Activated CD4-positive, alpha-beta memory T cell treated with anti-CD3 and anti-CD28 coated beads for 36 hours (primary cell): ENCODE measurements at regions of chr5 and their contacts with region 1.

Region 1: DNA sequence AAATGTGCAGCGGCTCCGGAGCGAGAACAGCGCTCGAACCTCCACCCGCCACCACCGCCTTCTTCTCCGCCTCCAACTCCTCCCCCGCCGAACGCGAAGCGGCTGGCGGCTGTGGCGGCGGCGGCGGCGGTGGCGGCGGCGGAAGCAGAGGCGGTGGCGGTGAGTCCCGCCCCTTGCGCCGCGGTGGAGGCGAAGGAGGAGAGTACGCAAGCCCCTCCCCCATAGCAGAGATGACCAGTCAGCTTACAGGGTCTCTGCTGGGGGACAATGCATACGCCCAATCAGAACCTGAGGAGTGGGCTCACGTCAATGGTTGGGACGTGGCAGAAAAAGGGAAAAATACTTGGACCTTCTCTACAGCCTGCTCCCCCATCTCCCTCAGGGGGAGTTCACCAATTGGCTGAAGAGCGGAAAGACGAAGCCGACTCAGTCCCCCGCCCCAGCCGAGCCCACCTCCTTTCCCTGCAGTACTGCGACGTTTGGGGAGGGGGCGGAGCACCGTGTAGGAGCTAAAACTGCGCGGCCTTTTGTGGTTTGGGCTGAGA is at the start of gene PJA2:
- DNase-seq: peak; percentile 98
- H3K4me3 Mint-ChIP-seq: peak within 1 kb of the TSS; percentile 89
- H3K27ac Mint-ChIP-seq: peak within 1 kb of the TSS; percentile 97
- H3K4me1 Mint-ChIP-seq: peaks cover 37% of the 10 kb centered on the region
- H3K27me3 Mint-ChIP-seq: no peaks in the 10 kb centered on the region
- total RNA-seq, gene PJA2: 57.3 to 58.5 TPM

Region 2: DNA sequence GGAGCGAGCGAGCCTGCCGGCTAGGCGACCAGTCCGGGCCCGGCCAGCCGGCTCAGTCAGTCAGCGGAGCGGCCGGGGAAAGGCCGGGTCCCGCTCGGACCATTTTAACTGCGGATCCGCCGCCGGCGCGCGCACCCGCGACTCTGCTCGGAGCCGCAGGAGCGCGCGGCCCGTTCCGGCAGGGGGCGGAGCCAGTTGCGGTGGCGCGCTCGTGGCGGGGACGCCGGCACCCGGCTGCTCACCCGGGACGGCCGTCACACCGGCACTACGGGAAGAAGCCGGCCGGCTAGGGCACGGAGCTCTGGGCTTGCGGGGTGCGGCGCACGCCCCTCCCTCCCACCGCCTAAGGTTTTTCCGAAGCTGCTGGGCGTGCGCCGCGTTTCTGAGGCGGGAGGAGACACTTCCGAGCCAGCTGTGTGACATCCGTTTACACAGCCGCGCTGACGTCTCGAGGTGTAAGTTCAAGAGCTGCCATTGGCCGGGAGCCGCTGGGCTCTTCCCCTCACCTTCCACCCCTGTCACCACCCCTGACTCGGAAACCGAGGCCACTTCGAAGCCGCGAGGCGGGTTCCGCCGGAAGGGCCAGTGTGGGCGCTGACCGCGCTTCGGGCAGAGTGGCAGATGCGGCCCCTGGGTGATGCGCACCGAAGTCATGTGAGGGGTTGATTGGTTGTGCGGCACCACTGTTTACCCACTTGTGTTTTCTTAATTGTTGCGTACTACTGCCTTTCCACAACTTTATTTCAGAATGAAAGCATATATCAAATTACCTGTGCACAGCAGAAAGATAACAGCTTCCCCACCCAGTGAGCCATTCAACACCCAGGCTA is 1027.7 kb before region 1 on chr5 and contains the start of gene FBXL17:
- CTCF ChIA-PET with region 1: no interaction called
- POLR2A ChIA-PET with region 1: no interaction called
- intact Hi-C with region 1: loop called (anchors 1 kb)
- DNase-seq: peak; percentile 96
- H3K4me3 Mint-ChIP-seq: peak within 1 kb of the TSS; percentile 79
- H3K27ac Mint-ChIP-seq: peak within 1 kb of the TSS; percentile 92
- H3K4me1 Mint-ChIP-seq: peaks cover 34% of the 10 kb centered on the region
- H3K27me3 Mint-ChIP-seq: peaks cover 1% of the 10 kb centered on the region
- total RNA-seq, gene FBXL17: 5.5 to 6.7 TPM

Region 3: GRCh38 chr5:108818613-108819272 is 591.2 kb before region 1 on chr5:
- CTCF ChIA-PET with region 1: no interaction called
- POLR2A ChIA-PET with region 1: no interaction called
- intact Hi-C with region 1: no loop called
- DNase-seq: no peak
- H3K4me3 Mint-ChIP-seq: no peak overlapping the region
- H3K27ac Mint-ChIP-seq: no peak overlapping the region
- H3K4me1 Mint-ChIP-seq: peaks cover 3% of the 10 kb centered on the region
- H3K27me3 Mint-ChIP-seq: no peaks in the 10 kb centered on the region

Region 4: DNA sequence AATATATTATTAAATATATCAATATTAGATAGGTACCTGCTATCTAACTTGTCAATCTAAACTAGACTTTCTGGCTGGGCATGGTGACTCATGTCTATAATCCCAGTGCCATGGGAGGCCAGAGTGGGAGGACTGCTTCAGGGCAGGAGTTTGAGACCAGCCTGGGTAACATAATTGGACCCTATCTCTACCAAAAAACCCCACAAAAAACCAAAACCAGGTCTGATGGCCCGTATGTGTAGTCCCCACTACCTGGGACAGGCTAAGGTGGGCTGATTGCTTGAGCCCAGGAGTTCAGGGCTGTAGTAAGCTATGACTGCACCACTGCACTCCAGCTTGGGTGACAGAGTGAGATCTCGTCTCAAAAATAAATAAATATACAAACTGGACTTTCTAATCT is 55.2 kb before region 1 on chr5:
- CTCF ChIA-PET with region 1: no interaction called
- POLR2A ChIA-PET with region 1: no interaction called
- intact Hi-C with region 1: loop called (anchors 2 kb)
- DNase-seq: no peak
- H3K4me3 Mint-ChIP-seq: no peak overlapping the region
- H3K27ac Mint-ChIP-seq: no peak overlapping the region
- H3K4me1 Mint-ChIP-seq: peaks cover 3% of the 10 kb centered on the region
- H3K27me3 Mint-ChIP-seq: no peaks in the 10 kb centered on the region

Region 5: DNA sequence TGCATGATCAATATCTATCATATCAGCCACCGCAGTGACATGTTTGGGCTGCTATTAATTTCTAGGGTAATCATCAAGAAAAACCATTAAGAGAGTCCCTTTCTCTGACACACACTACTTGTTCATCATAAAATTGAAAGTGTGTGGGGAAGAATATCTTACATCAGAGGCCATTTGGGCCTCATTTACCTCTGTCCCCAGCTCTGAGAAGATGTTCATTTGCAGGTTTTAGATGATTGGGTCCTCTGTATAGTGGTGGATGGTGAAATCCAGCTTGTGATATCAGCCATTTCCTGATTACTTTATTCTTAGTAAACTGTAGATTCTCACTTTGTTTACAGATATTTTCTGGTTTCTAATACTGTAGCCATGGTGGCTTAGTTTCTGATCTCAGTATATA is 29.7 kb after region 1 on chr5:
- CTCF ChIA-PET with region 1: no interaction called
- POLR2A ChIA-PET with region 1: no interaction called
- intact Hi-C with region 1: loop called (anchors 2 kb)
- DNase-seq: no peak
- H3K4me3 Mint-ChIP-seq: no peak overlapping the region
- H3K27ac Mint-ChIP-seq: no peak overlapping the region
- H3K4me1 Mint-ChIP-seq: no peaks in the 10 kb centered on the region
- H3K27me3 Mint-ChIP-seq: no peaks in the 10 kb centered on the region

Region 6: GRCh38 chr5:110086658-110087388 is 676.9 kb after region 1 on chr5:
- CTCF ChIA-PET with region 1: no interaction called
- POLR2A ChIA-PET with region 1: no interaction called
- intact Hi-C with region 1: loop called (anchors 10 kb)
- DNase-seq: peak; percentile 75
- H3K4me3 Mint-ChIP-seq: peak overlapping the region; percentile 23
- H3K27ac Mint-ChIP-seq: peak overlapping the region; percentile 83
- H3K4me1 Mint-ChIP-seq: peaks cover 31% of the 10 kb centered on the region
- H3K27me3 Mint-ChIP-seq: no peaks in the 10 kb centered on the region

Region 7: DNA sequence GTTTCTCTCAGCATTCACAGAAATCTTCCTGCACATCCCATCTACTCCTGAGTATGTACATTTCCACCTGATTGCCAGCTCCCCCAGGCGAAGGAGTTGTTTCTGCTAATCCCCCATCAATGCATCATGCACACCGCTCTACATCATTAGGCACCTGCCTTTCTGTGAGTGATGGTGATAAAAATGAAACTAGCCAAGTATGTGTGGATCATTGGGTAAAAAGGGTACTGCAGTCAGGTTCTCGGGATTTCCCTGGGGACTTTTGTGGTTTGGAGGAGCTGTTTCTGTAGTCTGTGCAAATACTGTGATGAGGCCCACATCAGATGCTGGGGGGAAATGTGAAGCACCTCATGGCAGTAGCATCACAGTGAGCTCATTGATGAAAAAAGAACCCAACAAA is 1844.7 kb after region 1 on chr5:
- CTCF ChIA-PET with region 1: no interaction called
- POLR2A ChIA-PET with region 1: no interaction called
- intact Hi-C with region 1: loop called (anchors 10 kb)
- DNase-seq: peak; percentile 89
- H3K4me3 Mint-ChIP-seq: peak overlapping the region; percentile 57
- H3K27ac Mint-ChIP-seq: peak overlapping the region; percentile 85
- H3K4me1 Mint-ChIP-seq: peaks cover 92% of the 10 kb centered on the region
- H3K27me3 Mint-ChIP-seq: no peaks in the 10 kb centered on the region